Activated CD4-positive, alpha-beta T cell treated with anti-CD3 and anti-CD28 coated beads, Interleukin-2, amount 10 ng/mL, durations not matched to agents 7 days and 5 days (primary cell): ENCODE measurements at regions of chr21 and their contacts with region 1.

Region 1: GRCh38 chr21:34878501-34878900 is 170.6 kb downstream of the RUNX1 start:
- DNase-seq: no peak
- H3K4me3 Mint-ChIP-seq: no peak overlapping the region
- H3K27ac Mint-ChIP-seq: no peak overlapping the region
- H3K4me1 Mint-ChIP-seq: peaks cover 52% of the 10 kb centered on the region
- H3K27me3 Mint-ChIP-seq: no peaks in the 10 kb centered on the region

Region 2: DNA sequence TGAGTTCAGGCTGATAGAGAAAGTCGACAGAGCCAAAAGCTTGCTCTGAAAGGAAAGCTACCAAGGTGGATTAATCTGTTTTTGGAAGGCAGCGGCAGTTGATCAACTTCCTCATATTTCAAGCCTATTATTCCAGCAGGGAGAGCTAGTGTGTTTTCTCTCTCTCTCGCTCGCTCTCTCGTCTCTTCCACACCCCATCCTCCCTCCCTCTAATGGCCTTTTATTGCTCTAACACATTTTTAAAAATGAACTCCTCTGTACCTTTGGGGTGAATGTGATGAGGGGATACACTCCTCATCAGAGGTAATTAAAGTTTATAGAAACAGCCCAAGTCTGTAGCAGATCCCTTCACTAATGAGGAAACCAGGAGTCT is 83.3 kb before region 1 on chr21:
- CTCF ChIA-PET with region 1: no interaction called
- POLR2A ChIA-PET with region 1: no interaction called
- DNase-seq: no peak
- H3K4me3 Mint-ChIP-seq: no peak overlapping the region
- H3K27ac Mint-ChIP-seq: no peak overlapping the region
- H3K4me1 Mint-ChIP-seq: no peaks in the 10 kb centered on the region
- H3K27me3 Mint-ChIP-seq: no peaks in the 10 kb centered on the region

Region 3: DNA sequence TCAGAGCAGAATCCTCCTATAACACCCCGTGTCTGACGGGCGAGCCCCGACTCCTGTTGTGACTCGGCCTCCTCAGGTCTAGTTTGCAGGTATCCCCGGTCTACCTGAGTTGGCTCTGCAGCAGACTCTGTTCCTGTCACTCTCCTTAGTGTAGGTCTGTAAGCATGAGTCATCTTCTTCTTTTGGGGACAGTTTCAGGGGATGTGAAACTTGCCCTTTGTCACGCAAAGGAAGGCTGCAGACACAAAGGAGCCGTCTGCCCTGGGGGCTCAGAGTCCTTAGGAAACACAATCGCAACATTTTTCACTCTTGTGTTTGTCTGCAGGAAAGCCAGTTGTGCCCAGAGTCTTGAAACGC is 12.6 kb before region 1 on chr21:
- CTCF ChIA-PET with region 1: interaction called, 16 read pairs
- POLR2A ChIA-PET with region 1: no interaction called
- DNase-seq: peak; percentile 39
- H3K4me3 Mint-ChIP-seq: peak overlapping the region; percentile 45
- H3K27ac Mint-ChIP-seq: peak overlapping the region; percentile 73
- H3K4me1 Mint-ChIP-seq: peaks cover 54% of the 10 kb centered on the region
- H3K27me3 Mint-ChIP-seq: no peaks in the 10 kb centered on the region

Region 4: DNA sequence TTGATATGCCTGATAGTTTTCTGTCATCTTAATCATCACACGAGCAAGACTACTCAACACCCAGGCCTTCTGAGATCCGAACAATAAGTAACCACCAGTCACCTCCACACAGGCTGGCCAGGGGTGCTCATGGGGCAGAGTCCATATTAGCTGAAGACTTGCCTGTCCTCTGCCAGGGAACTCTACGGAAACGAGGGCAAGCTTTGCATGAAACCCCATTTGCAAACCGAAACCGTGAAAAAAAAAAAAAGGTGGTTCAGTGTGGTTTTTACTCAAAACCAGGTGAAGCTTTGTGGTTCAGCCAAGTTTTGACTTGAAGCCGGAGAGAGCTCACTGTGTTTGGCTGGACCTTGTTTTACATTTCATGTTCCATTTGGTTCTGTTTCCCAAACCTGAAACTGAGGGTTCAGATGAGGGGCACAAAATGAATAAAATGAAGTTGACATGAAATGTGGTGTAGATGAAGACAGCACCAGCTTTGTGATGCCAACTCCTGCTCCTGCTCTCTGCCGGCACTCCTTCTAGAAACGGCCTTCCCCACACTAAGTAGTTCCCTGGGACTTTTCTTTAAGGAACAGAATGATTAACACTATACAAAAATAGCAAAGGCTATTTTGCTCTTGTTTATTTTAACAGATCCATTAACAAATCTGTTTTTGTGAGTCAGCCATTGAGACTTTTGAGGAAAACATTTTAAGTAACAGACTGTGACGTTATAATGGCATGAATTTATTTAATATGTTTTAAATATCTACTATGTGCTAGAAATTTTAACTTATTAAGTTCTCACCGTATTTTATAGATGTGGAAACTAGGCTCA is 95.9 kb after region 1 on chr21:
- CTCF ChIA-PET with region 1: no interaction called
- POLR2A ChIA-PET with region 1: no interaction called
- DNase-seq: peak; percentile 68
- H3K4me3 Mint-ChIP-seq: peak overlapping the region; percentile 65
- H3K27ac Mint-ChIP-seq: peak overlapping the region; percentile 87
- H3K4me1 Mint-ChIP-seq: peaks cover 72% of the 10 kb centered on the region
- H3K27me3 Mint-ChIP-seq: peaks cover 28% of the 10 kb centered on the region